ENCODE measurements at regions of chr3 and their contacts with region 1.

Region 1: GRCh38 chr3:179604321-179605078 is at the starts of genes MRPL47 and NDUFB5:
- DNase-seq: peak; percentile 79 to 97
- H3K4me3 ChIP-seq: peak within 1 kb of the TSS; percentile 78 to 84
- H3K27ac ChIP-seq: peak within 1 kb of the TSS; percentile 79 to 87
- H3K4me1 ChIP-seq: peaks cover 7 to 10% of the 10 kb centered on the region in 2 donors
- H3K27me3 ChIP-seq: no peaks in the 10 kb centered on the region
- CTCF ChIP-seq: no peak
- total RNA-seq, gene MRPL47: 41.1 TPM
- total RNA-seq, gene NDUFB5: 22.4 TPM

Region 2: DNA sequence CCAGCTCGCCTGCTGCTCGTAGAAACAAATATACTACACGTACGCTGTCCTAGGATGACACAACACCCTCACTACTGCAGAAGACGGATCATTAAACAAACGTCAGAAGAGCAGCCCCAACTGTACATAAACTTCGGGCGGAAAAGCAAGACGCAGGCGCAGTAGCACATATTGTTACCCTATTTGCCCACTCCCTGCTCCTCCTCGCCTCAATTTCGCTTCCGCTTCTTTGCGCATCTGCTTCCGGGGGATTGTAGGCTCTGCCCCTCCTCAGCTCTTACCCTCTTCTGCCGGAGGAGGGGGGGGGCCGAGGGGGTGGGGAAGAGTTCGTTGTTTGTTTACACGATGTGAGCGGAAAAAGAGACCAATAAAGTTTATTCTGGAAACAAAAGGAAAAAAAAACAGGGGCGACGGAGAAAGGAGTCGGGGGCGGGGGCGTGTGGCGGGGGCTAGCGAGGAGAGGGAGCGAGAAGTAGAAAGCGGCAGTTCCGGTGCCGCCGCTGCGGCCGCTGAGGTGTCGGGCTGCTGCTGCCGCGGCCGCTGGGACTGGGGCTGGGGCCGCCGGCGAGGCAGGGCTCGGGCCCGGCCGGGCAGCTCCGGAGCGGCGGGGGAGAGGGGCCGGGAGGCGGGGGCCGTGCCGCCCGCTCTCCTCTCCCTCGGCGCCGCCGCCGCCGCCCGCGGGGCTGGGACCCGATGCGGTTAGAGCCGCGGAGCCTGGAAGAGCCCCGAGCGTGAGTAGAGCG is 456.5 kb before region 1 on chr3 and contains the start of gene PIK3CA:
- intact Hi-C with region 1: loop called (anchors 1 kb)
- DNase-seq: peak; percentile 90 to 98
- H3K4me3 ChIP-seq: peak within 1 kb of the TSS; percentile 95 to 97
- H3K27ac ChIP-seq: peak within 1 kb of the TSS; percentile 93 to 99
- H3K4me1 ChIP-seq: peaks cover 0 to 14% of the 10 kb centered on the region in 2 donors
- H3K27me3 ChIP-seq: no peaks in the 10 kb centered on the region
- CTCF ChIP-seq: no peak
- total RNA-seq, gene PIK3CA: 12.7 TPM

Region 3: DNA sequence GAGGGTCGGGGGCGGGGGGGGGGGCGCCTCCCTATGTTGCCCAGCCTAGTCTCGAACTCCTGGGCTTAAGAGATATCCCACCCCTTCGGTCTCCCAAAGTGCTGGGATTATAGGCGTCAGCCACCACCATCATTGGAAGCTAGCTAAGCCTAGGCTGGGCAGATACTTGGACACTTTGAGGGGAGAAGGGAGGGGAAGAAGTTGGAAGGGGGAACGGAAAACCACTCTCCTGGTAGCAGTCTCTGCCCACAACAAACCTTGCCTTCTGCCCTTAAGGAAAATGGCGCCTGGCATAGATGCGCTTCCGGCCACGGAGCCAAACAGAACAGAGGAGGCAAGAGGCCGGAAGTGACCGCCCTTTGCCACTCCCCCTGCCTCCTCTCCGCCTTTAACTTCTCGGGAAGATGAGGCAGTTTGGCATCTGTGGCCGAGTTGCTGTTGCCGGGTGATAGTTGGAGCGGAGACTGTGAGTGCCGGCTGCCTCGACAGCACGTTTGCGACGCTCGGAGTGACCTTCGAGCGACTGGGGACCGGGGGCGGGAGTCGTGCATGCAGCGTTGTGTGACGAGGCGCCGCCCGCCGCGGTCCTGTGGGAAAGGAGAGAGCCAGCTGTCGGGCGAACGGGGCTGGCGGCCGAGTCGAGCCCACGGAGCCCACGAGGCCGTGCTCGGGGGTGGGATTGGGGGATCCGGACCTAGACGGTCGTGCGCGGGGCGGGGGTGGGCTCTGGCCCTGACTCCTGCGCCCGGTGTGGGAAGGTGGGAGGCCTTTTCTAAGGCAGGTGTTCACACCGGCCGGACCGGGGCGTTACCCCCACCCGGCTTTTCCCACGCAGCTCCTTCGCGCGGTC is 256.9 kb before region 1 on chr3 and contains the start of gene MFN1:
- intact Hi-C with region 1: loop called (anchors 1 kb)
- DNase-seq: peak; percentile 90 to 98
- H3K4me3 ChIP-seq: peak within 1 kb of the TSS; percentile 75 to 93
- H3K27ac ChIP-seq: peak within 1 kb of the TSS; percentile 82 to 90
- H3K4me1 ChIP-seq: peaks cover 7 to 20% of the 10 kb centered on the region in 2 donors
- H3K27me3 ChIP-seq: no peaks in the 10 kb centered on the region
- CTCF ChIP-seq: no peak
- total RNA-seq, gene MFN1: 25.1 TPM

Region 4: GRCh38 chr3:179544981-179545645 is 59.4 kb before region 1 on chr3:
- intact Hi-C with region 1: no loop called
- DNase-seq: no peak
- H3K4me3 ChIP-seq: no peak overlapping the region
- H3K27ac ChIP-seq: no peak overlapping the region
- H3K4me1 ChIP-seq: no peaks in the 10 kb centered on the region
- H3K27me3 ChIP-seq: no peaks in the 10 kb centered on the region
- CTCF ChIP-seq: no peak

Region 5: GRCh38 chr3:179562591-179563270 is 41.8 kb before region 1 on chr3 and contains the start of gene ACTL6A:
- intact Hi-C with region 1: loop called (anchors 1 kb)
- DNase-seq: peak; percentile 100
- H3K4me3 ChIP-seq: peak within 1 kb of the TSS; percentile 78 to 85
- H3K27ac ChIP-seq: peak within 1 kb of the TSS; percentile 70 to 84
- H3K4me1 ChIP-seq: peaks cover 0 to 3% of the 10 kb centered on the region in 2 donors
- H3K27me3 ChIP-seq: no peaks in the 10 kb centered on the region
- CTCF ChIP-seq: no peak
- total RNA-seq, gene ACTL6A: 23.9 TPM

Region 6: GRCh38 chr3:179653096-179653797 is 48.7 kb after region 1 on chr3:
- intact Hi-C with region 1: loop called (anchors 2 kb)
- DNase-seq: peak in 1 of 2 donors; percentile 82
- H3K4me3 ChIP-seq: peak overlapping the region; percentile 90
- H3K27ac ChIP-seq: peak overlapping the region; percentile 88 to 92
- H3K4me1 ChIP-seq: no peaks in the 10 kb centered on the region
- H3K27me3 ChIP-seq: no peaks in the 10 kb centered on the region
- CTCF ChIP-seq: peak in 1 of 3 experiments; percentile 9